ENCODE measurements at regions of chr15 and their contacts with region 1.

Region 1: DNA sequence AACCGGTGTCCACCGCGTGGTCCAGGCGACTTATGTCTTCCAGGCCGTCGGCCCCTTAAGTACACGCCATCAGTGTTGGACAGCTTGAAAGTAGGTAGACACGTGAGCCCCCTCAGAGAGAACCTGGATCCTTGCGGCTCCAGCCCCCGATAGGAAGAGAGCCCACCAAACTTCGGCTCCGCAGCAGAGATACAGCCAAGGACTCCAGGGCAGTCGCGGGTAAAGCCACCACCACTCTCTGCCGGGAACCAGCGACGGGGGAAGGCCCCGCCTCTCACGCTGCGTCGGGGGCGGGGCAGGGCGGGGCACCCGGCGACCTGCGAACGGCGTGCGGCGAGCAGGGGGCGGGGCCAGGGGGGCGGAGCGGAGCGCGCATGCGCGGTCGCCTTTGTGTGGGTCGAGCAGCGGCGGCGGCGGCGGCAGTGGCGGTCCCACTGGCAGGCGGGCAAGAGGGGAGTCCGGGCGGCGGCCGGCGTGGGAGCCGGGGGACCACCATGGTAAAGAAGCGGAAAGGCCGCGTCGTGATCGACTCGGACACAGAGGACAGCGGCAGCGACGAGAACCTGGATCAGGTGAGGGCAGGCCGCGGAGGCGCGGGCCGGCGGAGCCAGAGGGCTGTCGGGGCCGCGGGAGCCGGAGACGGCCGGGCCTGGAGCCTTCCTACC is at the start of gene RTF1:
- DNase-seq: peak; percentile 92 to 100 (median 96)
- ATAC-seq: peak; percentile 99
- H3K4me3 ChIP-seq: peak within 1 kb of the TSS; percentile 98
- H3K4me3 Mint-ChIP-seq: peak within 1 kb of the TSS; percentile 86 to 96 (median 95)
- H3K27ac ChIP-seq: peak within 1 kb of the TSS; percentile 81
- H3K27ac Mint-ChIP-seq: peak within 1 kb of the TSS; percentile 74 to 98 (median 93)
- H3K4me1 ChIP-seq: peaks cover 6 to 16% of the 10 kb centered on the region in 2 donors
- H3K4me1 Mint-ChIP-seq: peaks cover 34 to 53% (median 43%) of the 10 kb centered on the region in 7 donors
- H3K27me3 ChIP-seq: no peaks in the 10 kb centered on the region
- H3K27me3 Mint-ChIP-seq: no peaks in the 10 kb centered on the region
- total RNA-seq, gene RTF1: 34.0 to 41.3 (median 37.2) TPM

Region 2: GRCh38 chr15:41331833-41332787 is 84.8 kb before region 1 on chr15 and contains the start of gene OIP5:
- CTCF ChIA-PET with region 1: no interaction called
- POLR2A ChIA-PET with region 1: no interaction called
- intact Hi-C with region 1: loop called (anchors 1 to 5 kb)
- DNase-seq: peak; percentile 83 to 99 (median 97)
- ATAC-seq: peak; percentile 98
- H3K4me3 ChIP-seq: peak within 1 kb of the TSS; percentile 95
- H3K4me3 Mint-ChIP-seq: peak within 1 kb of the TSS; percentile 87 to 100 (median 97)
- H3K27ac ChIP-seq: peak within 1 kb of the TSS; percentile 52
- H3K27ac Mint-ChIP-seq: peak within 1 kb of the TSS; percentile 77 to 97 (median 91)
- H3K4me1 ChIP-seq: peaks cover 9 to 13% of the 10 kb centered on the region in 2 donors
- H3K4me1 Mint-ChIP-seq: peaks cover 12 to 32% (median 29%) of the 10 kb centered on the region in 7 donors
- H3K27me3 ChIP-seq: no peaks in the 10 kb centered on the region
- H3K27me3 Mint-ChIP-seq: no peaks in the 10 kb centered on the region
- total RNA-seq, gene OIP5: 0.32 to 15.2 (median 0.54) TPM in 4 of 5 experiments, not detected in the other

Region 3: GRCh38 chr15:41443275-41443674 is 26.4 kb after region 1 on chr15:
- CTCF ChIA-PET with region 1: no interaction called
- POLR2A ChIA-PET with region 1: interaction called, 10 read pairs
- intact Hi-C with region 1: no loop called
- DNase-seq: no peak
- ATAC-seq: no peak
- H3K4me3 ChIP-seq: no peak overlapping the region
- H3K4me3 Mint-ChIP-seq: no peak overlapping the region
- H3K27ac ChIP-seq: no peak overlapping the region
- H3K27ac Mint-ChIP-seq: peak overlapping the region in 4 of 9 donors; percentile 11 to 72 (median 52)
- H3K4me1 ChIP-seq: peaks cover 0 to 4% of the 10 kb centered on the region in 2 donors
- H3K4me1 Mint-ChIP-seq: peaks cover 15 to 29% (median 25%) of the 10 kb centered on the region in 7 donors
- H3K27me3 ChIP-seq: no peaks in the 10 kb centered on the region
- H3K27me3 Mint-ChIP-seq: no peaks in the 10 kb centered on the region

Region 4: GRCh38 chr15:41544650-41545015 is 127.8 kb after region 1 on chr15:
- CTCF ChIA-PET with region 1: no interaction called
- POLR2A ChIA-PET with region 1: no interaction called
- intact Hi-C with region 1: loop called (anchors 1 to 2 kb)
- DNase-seq: peak in 1 of 9 donors; percentile 1
- ATAC-seq: no peak
- H3K4me3 ChIP-seq: peak overlapping the region; percentile 96
- H3K4me3 Mint-ChIP-seq: peak overlapping the region; percentile 92 to 96 (median 94)
- H3K27ac ChIP-seq: peak overlapping the region; percentile 94
- H3K27ac Mint-ChIP-seq: peak overlapping the region in 8 of 9 donors; percentile 62 to 95 (median 92)
- H3K4me1 ChIP-seq: peaks cover 0 to 6% of the 10 kb centered on the region in 2 donors
- H3K4me1 Mint-ChIP-seq: peaks cover 0 to 31% (median 19%) of the 10 kb centered on the region in 7 donors
- H3K27me3 ChIP-seq: no peaks in the 10 kb centered on the region
- H3K27me3 Mint-ChIP-seq: peaks cover 0 to 4% (median 0%) of the 10 kb centered on the region in 5 donors

Measured in naive thymus-derived CD4-positive, alpha-beta T cell (primary cell).